ENCODE measurements at regions of chr17 and their contacts with region 1.

Region 1: GRCh38 chr17:29807520-29808351 is 122.3 kb downstream of the SSH2 start:
- DNase-seq: peak; percentile 83
- H3K4me3 ChIP-seq: peak overlapping the region; percentile 23
- H3K27ac ChIP-seq: peak overlapping the region; percentile 85
- H3K4me1 ChIP-seq: peaks cover 38% of the 10 kb centered on the region
- CTCF ChIP-seq: peak; percentile 87

Region 2: DNA sequence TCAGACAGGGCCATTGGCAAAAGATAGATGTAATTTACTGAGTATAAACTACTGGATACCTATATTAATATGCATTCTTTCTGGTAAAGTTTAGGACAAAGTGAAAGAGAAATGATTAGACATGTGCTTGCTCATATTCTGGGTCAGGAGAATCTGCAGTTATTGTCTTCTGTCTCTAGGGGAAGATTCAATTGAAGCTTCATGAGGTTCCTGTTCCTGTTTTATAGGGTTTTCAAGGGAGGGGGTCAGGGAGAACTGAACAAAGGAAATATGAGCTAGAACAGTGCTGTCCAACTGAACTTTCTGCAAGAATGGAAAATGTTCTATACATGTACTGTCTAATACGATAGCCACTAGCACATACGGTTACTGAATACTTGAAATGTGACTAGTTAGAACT is 125.7 kb before region 1 on chr17:
- CTCF ChIA-PET with region 1: no interaction called
- POLR2A ChIA-PET with region 1: no interaction called
- intact Hi-C with region 1: no loop called
- DNase-seq: peak; percentile 78
- H3K4me3 ChIP-seq: no peak overlapping the region
- H3K27ac ChIP-seq: peak overlapping the region; percentile 63
- H3K4me1 ChIP-seq: peaks cover 26% of the 10 kb centered on the region
- CTCF ChIP-seq: peak; percentile 63

Region 3: DNA sequence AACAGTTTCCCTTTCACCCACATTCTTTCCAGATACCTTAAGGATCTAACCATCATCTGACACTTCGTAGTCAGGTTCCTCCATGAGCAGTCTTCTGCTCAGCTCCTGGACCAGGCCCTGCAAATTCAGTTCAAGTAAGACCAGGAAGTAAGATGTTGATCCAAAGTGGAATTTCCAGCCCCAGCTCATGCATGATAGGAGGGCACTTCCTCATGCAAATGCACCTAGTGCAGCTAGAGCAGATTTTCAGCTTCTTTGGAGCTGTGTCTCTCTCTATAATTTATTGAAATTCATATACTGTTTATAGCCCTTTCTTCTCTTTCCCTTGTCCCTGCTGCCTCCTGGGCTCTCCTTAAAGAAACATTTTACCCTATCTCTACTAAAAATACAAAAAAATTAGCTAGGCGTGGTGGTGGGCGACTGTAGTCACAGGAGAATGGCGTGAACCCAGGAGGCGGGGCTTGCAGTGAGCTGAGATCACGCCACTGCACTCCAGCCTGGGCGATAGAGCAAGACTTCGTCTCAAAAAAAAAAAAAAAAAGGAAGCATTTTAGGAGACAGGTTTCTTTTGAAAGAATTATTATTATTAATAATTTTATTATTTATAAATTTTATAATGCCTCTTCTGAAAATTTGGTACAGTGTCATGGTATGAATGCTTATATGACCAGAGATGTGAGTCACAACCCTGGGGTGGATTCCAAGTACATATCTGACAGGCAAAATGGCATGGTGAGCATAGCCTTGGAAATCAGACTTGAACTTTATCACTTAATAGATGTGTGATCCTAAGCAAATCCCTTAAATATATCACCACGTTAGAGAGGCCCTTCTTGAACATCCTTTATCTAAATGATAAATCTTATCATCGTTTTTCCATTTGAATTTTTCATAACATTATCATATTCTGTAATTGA is 28.0 kb after region 1 on chr17:
- CTCF ChIA-PET with region 1: no interaction called
- POLR2A ChIA-PET with region 1: interaction called, 10 read pairs
- intact Hi-C with region 1: no loop called
- DNase-seq: no peak
- H3K4me3 ChIP-seq: no peak overlapping the region
- H3K27ac ChIP-seq: no peak overlapping the region
- H3K4me1 ChIP-seq: peaks cover 4% of the 10 kb centered on the region
- CTCF ChIP-seq: no peak

Region 4: GRCh38 chr17:30000001-30000754 is 192.4 kb after region 1 on chr17:
- CTCF ChIA-PET with region 1: no interaction called
- POLR2A ChIA-PET with region 1: interaction called, 5 read pairs
- intact Hi-C with region 1: loop called (anchors 1 kb)
- DNase-seq: peak; percentile 30
- H3K4me3 ChIP-seq: no peak overlapping the region
- H3K27ac ChIP-seq: no peak overlapping the region
- H3K4me1 ChIP-seq: no peaks in the 10 kb centered on the region
- CTCF ChIP-seq: peak; percentile 75

Region 5: DNA sequence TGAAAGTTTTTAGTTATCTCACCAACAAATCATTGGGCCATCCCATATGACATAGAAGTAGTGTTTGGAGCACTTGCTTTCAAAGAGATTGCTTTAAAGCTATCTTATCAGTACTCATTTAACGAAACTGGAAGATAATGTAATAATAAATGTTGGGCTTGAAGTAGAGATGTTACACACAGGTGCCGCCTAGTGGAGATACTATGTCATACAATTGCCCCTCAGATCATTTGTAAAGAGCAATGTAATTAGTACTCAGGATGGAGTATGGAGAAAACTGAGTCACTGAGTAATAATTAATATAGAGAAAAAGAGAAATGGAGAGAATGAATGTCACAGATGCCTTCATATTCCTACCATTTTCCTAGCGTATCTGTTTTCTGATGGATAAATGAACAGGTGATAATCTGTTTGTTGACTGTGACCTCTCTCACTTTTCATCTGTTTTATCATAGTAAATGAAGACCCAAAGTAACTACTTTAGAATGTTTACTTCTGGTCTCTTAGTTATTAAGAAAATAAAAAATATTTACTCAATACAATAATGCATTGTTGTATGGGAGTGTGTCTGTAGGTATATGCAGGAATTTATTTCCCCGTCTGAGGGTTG is 214.1 kb after region 1 on chr17:
- CTCF ChIA-PET with region 1: no interaction called
- POLR2A ChIA-PET with region 1: no interaction called
- intact Hi-C with region 1: loop called (anchors 1 kb)
- DNase-seq: peak; percentile 67
- H3K4me3 ChIP-seq: no peak overlapping the region
- H3K27ac ChIP-seq: no peak overlapping the region
- H3K4me1 ChIP-seq: no peaks in the 10 kb centered on the region
- CTCF ChIP-seq: peak; percentile 99

Region 6: DNA sequence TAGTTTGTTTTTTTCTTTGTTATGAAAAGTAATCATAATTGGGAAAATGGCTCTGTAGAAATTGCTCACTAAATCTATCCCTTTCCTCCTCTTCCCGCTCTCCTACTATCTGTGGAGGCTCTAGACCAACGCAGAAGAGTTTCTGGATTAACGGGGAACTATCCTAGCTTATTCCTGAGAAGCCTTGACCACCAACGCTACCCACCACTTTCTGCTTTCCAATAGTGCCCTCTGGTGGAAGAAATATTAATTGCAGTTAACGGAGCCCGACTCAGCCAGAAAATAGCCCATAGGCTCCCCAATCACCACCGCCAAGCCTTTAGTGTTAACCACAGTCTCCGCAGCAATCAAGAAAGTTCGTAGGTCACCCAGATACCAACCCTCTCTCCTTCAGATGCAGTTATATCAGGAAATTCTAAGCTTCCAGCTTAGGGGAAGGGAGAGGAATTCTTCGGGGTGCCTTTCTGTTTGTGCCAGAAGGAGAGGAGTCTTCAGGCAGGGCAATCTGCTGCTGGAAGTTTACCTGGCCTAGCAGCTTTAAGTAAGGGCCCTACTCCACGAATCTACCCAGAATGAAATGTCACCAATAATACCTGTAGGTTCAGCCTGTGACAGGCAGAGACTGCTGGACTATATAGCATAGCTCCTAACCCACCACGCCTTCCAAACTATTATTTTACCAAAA is 285.9 kb after region 1 on chr17:
- CTCF ChIA-PET with region 1: no interaction called
- POLR2A ChIA-PET with region 1: no interaction called
- intact Hi-C with region 1: loop called (anchors 5 kb)
- DNase-seq: peak; percentile 63
- H3K4me3 ChIP-seq: no peak overlapping the region
- H3K27ac ChIP-seq: no peak overlapping the region
- H3K4me1 ChIP-seq: peaks cover 6% of the 10 kb centered on the region
- CTCF ChIP-seq: peak; percentile 95

Measured in OCI-LY7 (cell line).